Psoas muscle (tissue), 8 donors: ENCODE measurements at regions of chr5 and their contacts with region 1.

Region 1: DNA sequence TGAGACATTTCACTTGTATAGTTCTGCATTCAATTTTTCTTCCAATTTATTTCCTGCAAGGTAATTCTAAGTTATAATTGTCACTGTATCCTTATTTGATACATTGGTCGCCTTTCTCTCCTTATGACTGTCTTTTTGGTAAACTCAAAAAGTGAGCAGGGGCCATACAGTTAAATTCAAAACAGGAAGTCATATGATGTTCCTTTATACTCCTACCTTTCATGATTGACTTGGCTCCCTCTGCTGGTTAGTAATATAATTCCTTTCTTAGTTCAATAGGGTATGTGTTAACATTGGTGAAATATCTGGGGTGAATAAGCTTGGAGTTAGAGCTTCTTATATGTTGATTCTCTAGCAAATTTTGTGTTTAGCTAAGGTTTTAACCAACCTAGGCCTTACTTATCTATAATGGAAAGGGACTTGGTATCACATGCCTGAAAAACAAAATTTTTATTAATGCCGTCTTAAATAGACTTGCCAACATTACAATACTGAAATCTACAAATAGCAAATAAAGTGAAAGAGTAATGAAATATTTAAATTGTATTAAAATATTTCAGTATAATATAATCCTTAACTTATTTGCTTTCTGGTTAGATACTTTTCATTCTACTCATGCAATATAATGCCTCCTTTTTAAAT is 6.0 kb upstream of the NIPBL start:
- DNase-seq: no peak
- ATAC-seq: peak; percentile 63 to 78 (median 70)
- H3K4me3 ChIP-seq: no peak overlapping the region
- H3K27ac ChIP-seq: no peak overlapping the region
- H3K4me1 ChIP-seq: peaks cover 17% of the 10 kb centered on the region
- H3K27me3 ChIP-seq: no peaks in the 10 kb centered on the region
- CTCF ChIP-seq: peak; percentile 67

Region 2: DNA sequence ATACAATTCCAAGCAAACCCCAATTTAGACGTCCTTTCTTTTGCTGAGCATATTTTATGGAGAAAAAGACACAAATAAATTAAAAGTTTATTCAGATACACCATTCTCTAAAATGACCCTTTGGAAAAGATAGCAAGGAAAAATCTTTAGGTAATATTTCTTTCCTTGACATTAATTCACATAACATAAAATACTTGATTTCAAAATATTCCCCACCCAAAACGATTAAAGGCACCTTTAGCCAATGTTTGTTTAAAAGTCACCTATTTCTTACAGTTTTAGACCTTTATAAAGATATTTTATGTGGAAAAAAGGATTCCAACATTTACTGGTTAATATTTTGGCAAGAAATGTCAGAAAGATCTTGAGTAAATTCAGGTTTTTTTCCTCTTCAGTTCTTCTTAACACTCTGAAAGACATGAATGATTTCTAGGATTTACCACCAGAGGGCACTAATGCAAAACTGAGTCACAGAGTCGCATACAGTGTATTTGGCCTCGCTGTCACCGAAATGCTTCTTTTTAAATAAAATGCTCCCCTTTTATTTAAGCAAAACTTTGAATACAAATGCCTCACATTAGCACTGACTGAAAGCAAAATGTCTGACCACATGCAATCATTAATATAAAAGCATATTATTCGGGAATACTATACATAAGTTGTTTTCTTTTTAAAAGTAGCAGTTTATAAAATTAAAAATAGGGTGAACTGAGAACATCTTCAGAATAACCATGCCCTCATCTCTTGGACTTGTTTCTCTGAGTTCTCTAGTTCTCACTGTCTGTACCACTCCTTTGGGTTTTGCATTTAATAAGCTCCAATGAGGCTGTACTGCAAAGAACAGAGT is 141.6 kb before region 1 on chr5:
- intact Hi-C with region 1: loop called in 1 of 2 experiments (anchors 5 kb)
- DNase-seq: no peak
- ATAC-seq: peak in 2 of 4 donors; percentile 65 to 85
- H3K4me3 ChIP-seq: no peak overlapping the region
- H3K27ac ChIP-seq: no peak overlapping the region
- H3K4me1 ChIP-seq: no peaks in the 10 kb centered on the region
- H3K27me3 ChIP-seq: no peaks in the 10 kb centered on the region
- CTCF ChIP-seq: peak; percentile 72

Region 3: GRCh38 chr5:36739751-36740221 is 130.7 kb before region 1 on chr5:
- intact Hi-C with region 1: loop called (anchors 5 kb)
- DNase-seq: peak; percentile 46 to 66
- ATAC-seq: peak; percentile 47 to 71 (median 62)
- H3K4me3 ChIP-seq: no peak overlapping the region
- H3K27ac ChIP-seq: no peak overlapping the region
- H3K4me1 ChIP-seq: peaks cover 6% of the 10 kb centered on the region
- H3K27me3 ChIP-seq: peaks cover 0 to 3% (median 0%) of the 10 kb centered on the region in 3 donors
- CTCF ChIP-seq: peak; percentile 59

Region 4: GRCh38 chr5:36908544-36909260 is 38.2 kb after region 1 on chr5:
- intact Hi-C with region 1: no loop called
- DNase-seq: no peak
- ATAC-seq: no peak
- H3K4me3 ChIP-seq: no peak overlapping the region
- H3K27ac ChIP-seq: no peak overlapping the region
- H3K4me1 ChIP-seq: peaks cover 60% of the 10 kb centered on the region
- H3K27me3 ChIP-seq: no peaks in the 10 kb centered on the region
- CTCF ChIP-seq: no peak